Activated CD8-positive, alpha-beta T cell treated with anti-CD3 and anti-CD28 coated beads for 36 hours (primary cell): ENCODE measurements at regions of chr6 and their contacts with region 1.

Region 1: GRCh38 chr6:111057074-111057752 is 30.1 kb upstream of the SLC16A10 start:
- DNase-seq: no peak
- ATAC-seq: peak; percentile 77
- H3K4me3 Mint-ChIP-seq: no peak overlapping the region
- H3K27ac Mint-ChIP-seq: no peak overlapping the region
- H3K4me1 Mint-ChIP-seq: peaks cover 2% of the 10 kb centered on the region
- H3K27me3 Mint-ChIP-seq: peaks cover 4% of the 10 kb centered on the region
- CTCF ChIP-seq: peak; percentile 74

Region 2: GRCh38 chr6:111030008-111031007 is 26.9 kb before region 1 on chr6:
- CTCF ChIA-PET with region 1: interaction called, 10 read pairs
- POLR2A ChIA-PET with region 1: no interaction called
- intact Hi-C with region 1: no loop called
- DNase-seq: no peak
- ATAC-seq: peak; percentile 20
- H3K4me3 Mint-ChIP-seq: no peak overlapping the region
- H3K27ac Mint-ChIP-seq: no peak overlapping the region
- H3K4me1 Mint-ChIP-seq: peaks cover 4% of the 10 kb centered on the region
- H3K27me3 Mint-ChIP-seq: no peaks in the 10 kb centered on the region
- CTCF ChIP-seq: no peak

Region 3: GRCh38 chr6:111068510-111069205 is 11.4 kb after region 1 on chr6:
- CTCF ChIA-PET with region 1: interaction called, 39 read pairs
- POLR2A ChIA-PET with region 1: no interaction called
- intact Hi-C with region 1: no loop called
- DNase-seq: no peak
- ATAC-seq: no peak
- H3K4me3 Mint-ChIP-seq: no peak overlapping the region
- H3K27ac Mint-ChIP-seq: no peak overlapping the region
- H3K4me1 Mint-ChIP-seq: no peaks in the 10 kb centered on the region
- H3K27me3 Mint-ChIP-seq: peaks cover 3% of the 10 kb centered on the region
- CTCF ChIP-seq: no peak

Region 4: GRCh38 chr6:111210194-111210728 is 153.0 kb after region 1 on chr6:
- CTCF ChIA-PET with region 1: interaction called, 75 read pairs
- POLR2A ChIA-PET with region 1: interaction called, 3 read pairs
- intact Hi-C with region 1: loop called (anchors 1 kb)
- DNase-seq: peak; percentile 12
- ATAC-seq: peak; percentile 94
- H3K4me3 Mint-ChIP-seq: no peak overlapping the region
- H3K27ac Mint-ChIP-seq: no peak overlapping the region
- H3K4me1 Mint-ChIP-seq: no peaks in the 10 kb centered on the region
- H3K27me3 Mint-ChIP-seq: no peaks in the 10 kb centered on the region
- CTCF ChIP-seq: peak; percentile 81